Ascending aorta (tissue), 2 donors: ENCODE measurements at regions of chr10 and their contacts with region 1.

Region 1: DNA sequence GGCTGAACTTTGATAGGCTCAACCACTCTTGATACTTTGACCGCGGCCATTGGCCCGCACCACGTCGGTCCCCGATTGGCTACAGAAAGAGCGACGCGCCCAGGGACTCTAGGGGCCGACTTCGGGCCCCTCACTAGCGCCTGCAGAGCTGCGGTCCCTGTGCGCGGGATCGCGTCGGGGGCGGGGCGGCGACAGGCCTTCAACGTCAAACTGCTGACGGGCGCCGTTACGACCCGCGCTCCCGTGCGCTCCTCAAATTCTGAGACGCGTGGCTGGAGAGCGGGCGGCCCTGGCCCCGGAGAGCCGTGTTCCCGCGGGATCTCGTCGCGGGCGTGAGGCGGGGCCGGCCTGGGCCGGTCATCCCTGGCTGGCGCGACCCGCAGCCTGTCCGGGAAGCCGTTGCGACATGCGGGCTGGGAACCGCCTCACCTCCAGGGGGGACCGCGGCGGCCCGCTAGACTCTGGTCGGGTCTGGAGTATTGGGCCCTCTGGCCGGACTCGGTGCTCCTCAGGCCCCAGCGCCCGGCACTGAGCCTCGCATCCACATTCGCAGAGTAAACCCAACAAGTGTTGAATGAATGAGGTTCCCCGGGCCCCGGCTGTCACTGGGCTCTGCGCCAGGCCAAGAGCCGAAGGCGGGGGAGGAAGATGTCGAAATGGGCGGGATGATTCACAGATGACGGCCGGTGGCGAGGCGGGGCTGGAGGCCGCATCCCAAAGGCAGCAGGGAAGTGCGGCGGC is 644 bp upstream of the SLC25A28 start:
- DNase-seq: peak; percentile 85 to 97
- H3K4me3 ChIP-seq: peak overlapping the region; percentile 61 to 70
- H3K27ac ChIP-seq: peak overlapping the region; percentile 97 to 99
- H3K4me1 ChIP-seq: peaks cover 2 to 27% of the 10 kb centered on the region in 2 donors
- H3K27me3 ChIP-seq: no peaks in the 10 kb centered on the region
- CTCF ChIP-seq: no peak

Region 2: DNA sequence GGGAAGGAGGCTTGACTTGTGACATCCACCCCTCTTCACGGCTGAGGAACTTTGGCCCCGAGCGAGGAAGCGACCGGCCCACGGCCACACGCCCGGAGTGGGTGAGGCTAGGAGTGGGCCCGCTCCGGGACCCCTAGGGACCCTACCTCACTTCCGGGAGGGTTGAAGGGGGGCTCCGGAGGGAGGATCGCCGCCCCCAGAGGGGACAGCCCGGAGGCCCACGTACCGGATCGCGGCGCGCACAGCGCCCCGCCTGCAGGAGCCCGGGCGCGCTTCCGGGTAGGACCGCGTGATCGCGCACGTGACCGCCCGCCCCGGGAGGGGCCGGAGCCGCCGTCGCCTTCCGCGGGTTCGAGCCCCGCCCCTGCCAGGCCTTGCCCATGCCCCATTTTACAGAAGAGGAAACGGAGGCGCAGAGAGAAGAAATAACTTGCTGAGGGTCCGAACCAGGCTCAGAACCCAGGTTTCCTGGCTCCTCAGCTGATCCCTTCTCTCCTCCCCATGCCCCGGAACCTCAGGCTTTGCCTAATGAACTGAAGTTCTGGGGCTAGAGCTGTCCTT is 1174.1 kb before region 1 on chr10 and contains the start of gene HPS1:
- intact Hi-C with region 1: loop called (anchors 10 kb)
- DNase-seq: peak in 1 of 2 donors; percentile 90
- H3K4me3 ChIP-seq: peak within 1 kb of the TSS; percentile 74 to 78
- H3K27ac ChIP-seq: peak within 1 kb of the TSS; percentile 93 to 95
- H3K4me1 ChIP-seq: peaks cover 0 to 6% of the 10 kb centered on the region in 2 donors
- H3K27me3 ChIP-seq: no peaks in the 10 kb centered on the region
- CTCF ChIP-seq: no peak
- total RNA-seq, gene HPS1: 42.7 TPM

Region 3: DNA sequence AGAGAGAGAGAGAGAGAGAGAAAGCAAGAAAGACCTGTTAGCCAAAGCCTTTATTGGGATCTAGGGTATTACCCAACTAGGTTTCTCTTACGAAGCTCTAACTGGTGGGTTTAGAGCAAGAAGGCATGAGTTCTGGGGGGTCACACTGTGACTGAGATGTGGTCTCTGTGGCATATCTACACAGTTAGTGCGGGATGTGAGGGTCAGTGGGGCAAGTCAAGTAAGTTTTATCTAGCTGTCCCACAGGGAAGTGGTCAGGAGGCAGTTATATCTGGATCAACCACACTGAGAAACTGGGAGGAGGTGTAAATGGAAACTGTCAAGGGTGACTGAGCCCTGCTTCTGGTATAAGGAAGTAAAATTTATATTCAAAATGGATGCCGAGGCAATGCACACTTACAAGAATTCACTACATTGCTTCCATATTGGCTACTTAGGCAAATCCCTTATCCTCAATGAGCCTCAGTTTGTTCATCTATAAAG is 842.6 kb before region 1 on chr10:
- intact Hi-C with region 1: no loop called
- DNase-seq: no peak
- H3K4me3 ChIP-seq: no peak overlapping the region
- H3K27ac ChIP-seq: no peak overlapping the region
- H3K4me1 ChIP-seq: no peaks in the 10 kb centered on the region
- H3K27me3 ChIP-seq: no peaks in the 10 kb centered on the region
- CTCF ChIP-seq: no peak

Region 4: GRCh38 chr10:99659031-99659867 is 38.4 kb after region 1 on chr10 and contains the start of gene ENTPD7:
- intact Hi-C with region 1: loop called (anchors 1 kb)
- DNase-seq: peak; percentile 79 to 95
- H3K4me3 ChIP-seq: peak within 1 kb of the TSS; percentile 71 to 84
- H3K27ac ChIP-seq: no peak within 1 kb of the TSS
- H3K4me1 ChIP-seq: peaks cover 0 to 7% of the 10 kb centered on the region in 2 donors
- H3K27me3 ChIP-seq: no peaks in the 10 kb centered on the region
- CTCF ChIP-seq: peak; percentile 18 to 45 (median 39)
- total RNA-seq, gene ENTPD7: 9.9 TPM

Region 5: DNA sequence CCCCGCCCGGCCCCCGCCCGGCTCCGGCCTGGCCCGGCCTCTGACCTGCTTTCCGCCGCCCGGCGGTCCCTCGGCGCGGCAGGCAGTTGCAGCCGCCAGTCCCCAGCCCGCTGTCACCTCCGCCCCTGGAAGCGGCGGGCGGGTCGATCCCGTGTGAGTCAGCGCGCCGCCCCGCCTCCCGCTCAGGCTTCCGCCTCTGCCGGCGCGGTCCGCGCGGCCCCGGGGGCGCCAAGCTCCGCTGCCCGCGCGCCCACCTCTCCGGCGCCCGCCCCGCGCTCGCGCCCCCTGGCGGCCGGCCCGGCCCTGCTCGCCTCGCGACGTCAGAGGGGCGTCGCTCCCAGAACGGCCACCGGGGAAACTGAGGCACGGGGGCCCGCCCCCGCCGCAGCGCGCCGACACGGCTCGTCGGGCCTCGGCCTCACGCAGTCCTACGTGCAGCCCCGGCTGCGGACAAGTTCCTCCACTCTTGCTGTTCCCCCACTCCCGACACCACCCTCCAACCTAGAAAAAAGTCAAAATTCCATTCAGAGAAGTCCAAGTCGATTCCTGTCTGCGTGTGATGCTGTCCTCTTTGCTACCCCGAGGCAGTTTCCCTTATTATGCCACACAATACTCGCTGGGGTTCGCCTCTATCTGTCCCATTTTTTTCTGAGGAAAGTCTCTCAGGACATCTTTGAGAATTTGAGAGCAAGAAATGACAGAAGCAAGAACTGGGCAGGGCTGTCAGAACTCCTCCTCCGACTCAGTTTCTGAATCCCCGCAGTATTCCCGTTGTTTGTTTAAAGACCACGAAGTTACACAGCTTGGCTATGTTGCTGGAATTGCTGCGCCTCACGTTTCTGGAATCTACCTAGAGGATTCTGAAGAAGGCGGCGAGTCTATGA is 389.2 kb after region 1 on chr10 and contains the start of gene DNMBP:
- intact Hi-C with region 1: loop called (anchors 10 kb)
- DNase-seq: peak; percentile 14 to 89
- H3K4me3 ChIP-seq: peak within 1 kb of the TSS; percentile 78 to 98
- H3K27ac ChIP-seq: peak within 1 kb of the TSS; percentile 65 to 80
- H3K4me1 ChIP-seq: peaks cover 3 to 19% of the 10 kb centered on the region in 2 donors
- H3K27me3 ChIP-seq: no peaks in the 10 kb centered on the region
- CTCF ChIP-seq: peak; percentile 35 to 85 (median 49)
- total RNA-seq, gene DNMBP: 15.9 TPM

Region 6: DNA sequence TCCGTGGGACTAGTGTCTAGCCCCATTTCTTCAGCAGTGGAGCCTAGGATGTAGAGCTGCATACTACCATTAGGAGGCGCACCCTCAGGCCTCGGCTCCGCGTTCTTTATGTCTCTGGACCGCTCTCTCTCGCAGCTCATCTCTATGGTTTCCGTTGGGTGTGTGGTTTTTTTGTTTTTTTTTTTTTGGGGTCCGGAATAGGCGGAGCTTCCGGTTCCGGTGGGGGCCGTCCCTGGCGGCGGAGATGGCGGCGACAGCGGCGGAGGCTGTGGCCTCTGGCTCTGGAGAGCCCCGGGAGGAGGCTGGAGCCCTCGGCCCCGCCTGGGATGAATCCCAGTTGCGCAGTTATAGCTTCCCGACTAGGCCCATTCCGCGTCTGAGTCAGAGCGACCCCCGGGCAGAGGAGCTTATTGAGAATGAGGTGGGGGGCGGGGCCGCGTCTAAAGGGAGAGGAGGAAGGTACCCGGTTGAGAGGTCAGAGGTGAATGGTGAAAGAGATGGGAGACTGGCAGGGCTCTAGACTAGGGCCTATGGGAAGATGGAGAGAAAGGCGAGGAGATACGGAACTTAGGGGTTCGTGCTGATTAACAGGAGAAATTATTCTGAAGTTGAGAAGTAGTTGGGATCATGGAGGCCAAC is 915.0 kb after region 1 on chr10 and contains the start of gene HIF1AN:
- intact Hi-C with region 1: loop called (anchors 10 kb)
- DNase-seq: peak; percentile 67 to 95
- H3K4me3 ChIP-seq: peak within 1 kb of the TSS; percentile 79 to 86
- H3K27ac ChIP-seq: peak within 1 kb of the TSS; percentile 70 to 81
- H3K4me1 ChIP-seq: peaks cover 0 to 14% of the 10 kb centered on the region in 2 donors
- H3K27me3 ChIP-seq: no peaks in the 10 kb centered on the region
- CTCF ChIP-seq: peak; percentile 67 to 97 (median 92)
- total RNA-seq, gene HIF1AN: 4.7 TPM